ENCODE measurements at regions of chr19 and their contacts with region 1.

Region 1: DNA sequence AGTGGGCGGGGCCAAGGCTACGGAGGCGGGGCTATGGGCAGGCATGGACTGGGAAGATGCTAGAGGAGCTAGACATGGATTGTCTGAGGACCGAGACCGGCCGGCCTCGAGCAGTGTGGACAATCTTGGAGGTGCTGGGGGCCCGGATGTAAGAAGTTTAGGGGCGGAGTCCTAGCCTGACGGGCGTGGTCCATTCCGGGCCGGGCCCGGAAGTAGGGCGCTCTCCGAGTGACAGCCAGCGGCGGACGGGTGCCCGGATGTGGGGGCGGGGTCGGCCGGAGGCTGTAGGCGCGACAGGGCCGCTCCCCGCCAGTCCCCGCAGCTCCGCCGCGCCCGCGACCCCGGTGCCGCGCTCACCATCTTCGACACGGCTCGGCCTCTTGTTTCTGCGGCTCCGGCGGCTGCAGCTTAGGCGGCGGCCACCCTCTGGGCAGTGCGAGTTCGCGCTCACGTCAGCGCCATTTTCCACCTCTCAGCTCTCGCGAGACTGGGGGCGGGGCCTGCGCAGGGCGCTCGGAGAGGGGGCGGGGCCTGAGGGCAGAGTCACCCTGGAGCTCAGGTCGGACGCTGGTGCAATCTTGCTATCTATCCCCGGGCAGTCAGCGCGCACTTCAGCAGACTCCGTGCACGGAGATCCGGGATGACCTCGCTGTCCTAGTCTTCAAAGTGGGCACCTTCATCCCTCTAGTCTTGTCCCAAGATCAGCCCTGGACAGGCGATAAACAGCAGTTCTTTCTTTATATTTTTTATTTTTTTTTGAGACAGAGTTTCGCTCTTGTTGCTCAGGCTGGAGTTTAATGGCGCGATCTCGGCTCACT is at the start of gene ZNF414:
- DNase-seq: peak; percentile 93 to 96 (median 94)
- H3K4me3 ChIP-seq: peak within 1 kb of the TSS; percentile 43 to 85 (median 66)
- H3K4me3 Mint-ChIP-seq: peak within 1 kb of the TSS; percentile 80 to 92
- H3K27ac ChIP-seq: peak within 1 kb of the TSS; percentile 76 to 82
- H3K27ac Mint-ChIP-seq: peak within 1 kb of the TSS; percentile 95 to 99 (median 98)
- H3K4me1 ChIP-seq: peaks cover 68 to 70% of the 10 kb centered on the region in 2 donors
- H3K4me1 Mint-ChIP-seq: peaks cover 59% of the 10 kb centered on the region
- H3K27me3 ChIP-seq: no peaks in the 10 kb centered on the region
- H3K27me3 Mint-ChIP-seq: peaks cover 0 to 4% (median 0%) of the 10 kb centered on the region in 3 donors
- CTCF ChIP-seq: no peak
- polyA plus RNA-seq, gene ZNF414: 4.1 to 21.1 (median 4.7) TPM

Region 2: GRCh38 chr19:8412783-8413628 is 100.9 kb before region 1 on chr19 and contains the start of gene MARCHF2:
- intact Hi-C with region 1: loop called (anchors 5 to 10 kb)
- DNase-seq: peak; percentile 96 to 97 (median 97)
- H3K4me3 ChIP-seq: peak within 1 kb of the TSS; percentile 75 to 93 (median 91)
- H3K4me3 Mint-ChIP-seq: peak within 1 kb of the TSS; percentile 73 to 84
- H3K27ac ChIP-seq: peak within 1 kb of the TSS in 1 of 2 donors; percentile 73
- H3K27ac Mint-ChIP-seq: peak within 1 kb of the TSS in 3 of 7 donors; percentile 3 to 86 (median 40)
- H3K4me1 ChIP-seq: peaks cover 10 to 19% of the 10 kb centered on the region in 2 donors
- H3K4me1 Mint-ChIP-seq: peaks cover 19% of the 10 kb centered on the region
- H3K27me3 ChIP-seq: no peaks in the 10 kb centered on the region
- H3K27me3 Mint-ChIP-seq: peaks cover 0 to 2% (median 2%) of the 10 kb centered on the region in 3 donors
- CTCF ChIP-seq: peak; percentile 75
- polyA plus RNA-seq, gene MARCHF2: 47.8 to 117 (median 90.8) TPM

Region 3: GRCh38 chr19:8456064-8456463 is 57.8 kb before region 1 on chr19:
- intact Hi-C with region 1: no loop called
- DNase-seq: no peak
- H3K4me3 ChIP-seq: no peak overlapping the region
- H3K4me3 Mint-ChIP-seq: no peak overlapping the region
- H3K27ac ChIP-seq: peak overlapping the region in 1 of 2 donors; percentile 23
- H3K27ac Mint-ChIP-seq: peak overlapping the region in 1 of 7 donors; percentile 65
- H3K4me1 ChIP-seq: no peaks in the 10 kb centered on the region
- H3K4me1 Mint-ChIP-seq: peaks cover 24% of the 10 kb centered on the region
- H3K27me3 ChIP-seq: no peaks in the 10 kb centered on the region
- H3K27me3 Mint-ChIP-seq: peaks cover 0 to 3% (median 0%) of the 10 kb centered on the region in 3 donors
- CTCF ChIP-seq: no peak

Region 4: GRCh38 chr19:8561075-8561764 is 47.3 kb after region 1 on chr19:
- intact Hi-C with region 1: loop called in 1 of 2 experiments (anchors 5 kb)
- DNase-seq: no peak
- H3K4me3 ChIP-seq: no peak overlapping the region
- H3K4me3 Mint-ChIP-seq: no peak overlapping the region
- H3K27ac ChIP-seq: peak overlapping the region in 1 of 2 donors; percentile 83
- H3K27ac Mint-ChIP-seq: peak overlapping the region; percentile 71 to 95 (median 84)
- H3K4me1 ChIP-seq: peaks cover 61 to 78% of the 10 kb centered on the region in 2 donors
- H3K4me1 Mint-ChIP-seq: peaks cover 72% of the 10 kb centered on the region
- H3K27me3 ChIP-seq: no peaks in the 10 kb centered on the region
- H3K27me3 Mint-ChIP-seq: peaks cover 0 to 3% (median under 1%) of the 10 kb centered on the region in 3 donors
- CTCF ChIP-seq: no peak

Region 5: GRCh38 chr19:8580710-8581281 is 66.9 kb after region 1 on chr19:
- intact Hi-C with region 1: no loop called
- DNase-seq: peak; percentile 79 to 88 (median 80)
- H3K4me3 ChIP-seq: peak overlapping the region in 1 of 3 experiments; percentile 46
- H3K4me3 Mint-ChIP-seq: no peak overlapping the region
- H3K27ac ChIP-seq: peak overlapping the region in 1 of 2 donors; percentile 14
- H3K27ac Mint-ChIP-seq: peak overlapping the region in 1 of 7 donors; percentile 80
- H3K4me1 ChIP-seq: peaks cover 37 to 39% of the 10 kb centered on the region in 2 donors
- H3K4me1 Mint-ChIP-seq: peaks cover 28% of the 10 kb centered on the region
- H3K27me3 ChIP-seq: no peaks in the 10 kb centered on the region
- H3K27me3 Mint-ChIP-seq: peaks cover 0 to 2% (median 2%) of the 10 kb centered on the region in 3 donors
- CTCF ChIP-seq: peak; percentile 100